ENCODE measurements at regions of chr17 and their contacts with region 1.

Region 1: GRCh38 chr17:78497115-78497540 is 80.1 kb downstream of the DNAH17 start:
- DNase-seq: peak; percentile 72
- ATAC-seq: peak; percentile 96
- H3K4me3 ChIP-seq: no peak overlapping the region
- H3K27ac ChIP-seq: no peak overlapping the region
- H3K4me1 ChIP-seq: no peaks in the 10 kb centered on the region
- H3K27me3 ChIP-seq: peaks cover 9% of the 10 kb centered on the region; the same call in 1 of the 2 replicates
- CTCF ChIP-seq: peak; percentile 92
- POLR2A ChIP-seq: 0 out of 2 replicates have a peak, but pooled peaks have one; percentile 28
- RAD21 ChIP-seq: peak; percentile 98

Region 2: GRCh38 chr17:78708510-78708973 is 211.4 kb after region 1 on chr17:
- CTCF ChIA-PET with region 1: interaction called, 13 read pairs
- POLR2A ChIA-PET with region 1: no interaction called
- dilution Hi-C with region 1: no loop called
- in situ Hi-C with region 1: loop called (anchors 5 kb)
- intact Hi-C with region 1: loop called (anchors 1 kb)
- DNase-seq: peak; percentile 83
- ATAC-seq: peak; percentile 98
- H3K4me3 ChIP-seq: no peak overlapping the region
- H3K27ac ChIP-seq: no peak overlapping the region
- H3K4me1 ChIP-seq: peaks cover 4% of the 10 kb centered on the region; the same call in 1 of the 2 replicates
- H3K27me3 ChIP-seq: no peaks in the 10 kb centered on the region
- CTCF ChIP-seq: peak; percentile 93
- POLR2A ChIP-seq: no peak
- RAD21 ChIP-seq: peak; percentile 99

Region 3: GRCh38 chr17:78745407-78746088 is 248.4 kb after region 1 on chr17:
- CTCF ChIA-PET with region 1: no interaction called
- POLR2A ChIA-PET with region 1: no interaction called
- dilution Hi-C with region 1: no loop called
- in situ Hi-C with region 1: no loop called
- intact Hi-C with region 1: loop called (anchors 1 kb)
- DNase-seq: peak; percentile 49
- ATAC-seq: peak; percentile 42; the same call in 1 of the 2 replicates
- H3K4me3 ChIP-seq: no peak overlapping the region
- H3K27ac ChIP-seq: no peak overlapping the region
- H3K4me1 ChIP-seq: peaks cover 9% of the 10 kb centered on the region
- H3K27me3 ChIP-seq: no peaks in the 10 kb centered on the region
- CTCF ChIP-seq: peak; percentile 56
- POLR2A ChIP-seq: no peak
- RAD21 ChIP-seq: peak; percentile 35

Region 4: GRCh38 chr17:78798695-78799559 is 301.8 kb after region 1 on chr17:
- CTCF ChIA-PET with region 1: interaction called, 4 read pairs
- POLR2A ChIA-PET with region 1: no interaction called
- dilution Hi-C with region 1: no loop called
- in situ Hi-C with region 1: no loop called
- intact Hi-C with region 1: loop called (anchors 1 kb)
- DNase-seq: peak; percentile 13
- ATAC-seq: peak; percentile 50; the same call in 1 of the 2 replicates
- H3K4me3 ChIP-seq: no peak overlapping the region
- H3K27ac ChIP-seq: no peak overlapping the region
- H3K4me1 ChIP-seq: peaks cover 2% of the 10 kb centered on the region; the same call in 1 of the 2 replicates
- H3K27me3 ChIP-seq: no peaks in the 10 kb centered on the region
- CTCF ChIP-seq: peak; percentile 27; the same call in 1 of the 2 replicates
- POLR2A ChIP-seq: no peak
- RAD21 ChIP-seq: peak; percentile 16; the same call in 1 of the 2 replicates

Region 5: DNA sequence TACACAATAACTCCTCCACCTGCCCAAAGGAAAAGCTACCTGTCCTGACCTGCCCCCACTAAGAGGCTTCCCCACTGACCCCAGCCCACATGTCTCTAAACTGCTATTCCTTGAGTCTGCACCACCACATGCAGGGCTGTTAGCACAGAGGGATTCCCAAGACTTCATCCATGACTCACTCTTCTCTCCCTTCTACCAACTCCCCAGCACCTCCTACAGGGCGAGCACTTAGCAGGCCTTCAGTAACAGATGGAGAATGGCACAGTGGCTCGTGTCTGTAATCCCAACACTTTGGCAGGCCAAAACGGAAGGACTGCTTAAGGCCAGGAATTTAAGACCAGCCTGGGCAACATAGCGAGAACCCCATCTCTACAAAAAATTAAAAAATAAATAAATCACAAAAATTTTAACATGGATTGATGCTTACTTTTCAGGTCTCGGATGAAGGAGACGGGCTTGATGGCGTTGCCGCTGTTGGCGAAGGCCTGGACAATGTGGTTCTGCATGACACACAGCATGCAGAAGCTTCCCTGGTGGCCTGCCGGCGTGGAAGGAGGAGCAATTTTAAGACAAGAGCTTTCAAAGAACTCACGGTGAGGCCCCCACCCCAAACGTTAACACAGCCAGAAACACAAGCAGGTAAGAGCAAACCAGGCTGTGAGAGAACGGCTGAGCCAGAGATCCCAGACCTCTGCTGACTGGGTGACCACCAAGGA is 331.5 kb after region 1 on chr17:
- CTCF ChIA-PET with region 1: no interaction called
- POLR2A ChIA-PET with region 1: no interaction called
- dilution Hi-C with region 1: no loop called
- in situ Hi-C with region 1: no loop called
- intact Hi-C with region 1: loop called (anchors 10 kb)
- DNase-seq: peak; percentile 78
- ATAC-seq: peak; percentile 91
- H3K4me3 ChIP-seq: no peak overlapping the region
- H3K27ac ChIP-seq: no peak overlapping the region
- H3K4me1 ChIP-seq: peaks cover 2% of the 10 kb centered on the region; the same call in 1 of the 2 replicates
- H3K27me3 ChIP-seq: no peaks in the 10 kb centered on the region
- CTCF ChIP-seq: peak; percentile 65
- POLR2A ChIP-seq: no peak
- RAD21 ChIP-seq: peak; percentile 47

Region 6: DNA sequence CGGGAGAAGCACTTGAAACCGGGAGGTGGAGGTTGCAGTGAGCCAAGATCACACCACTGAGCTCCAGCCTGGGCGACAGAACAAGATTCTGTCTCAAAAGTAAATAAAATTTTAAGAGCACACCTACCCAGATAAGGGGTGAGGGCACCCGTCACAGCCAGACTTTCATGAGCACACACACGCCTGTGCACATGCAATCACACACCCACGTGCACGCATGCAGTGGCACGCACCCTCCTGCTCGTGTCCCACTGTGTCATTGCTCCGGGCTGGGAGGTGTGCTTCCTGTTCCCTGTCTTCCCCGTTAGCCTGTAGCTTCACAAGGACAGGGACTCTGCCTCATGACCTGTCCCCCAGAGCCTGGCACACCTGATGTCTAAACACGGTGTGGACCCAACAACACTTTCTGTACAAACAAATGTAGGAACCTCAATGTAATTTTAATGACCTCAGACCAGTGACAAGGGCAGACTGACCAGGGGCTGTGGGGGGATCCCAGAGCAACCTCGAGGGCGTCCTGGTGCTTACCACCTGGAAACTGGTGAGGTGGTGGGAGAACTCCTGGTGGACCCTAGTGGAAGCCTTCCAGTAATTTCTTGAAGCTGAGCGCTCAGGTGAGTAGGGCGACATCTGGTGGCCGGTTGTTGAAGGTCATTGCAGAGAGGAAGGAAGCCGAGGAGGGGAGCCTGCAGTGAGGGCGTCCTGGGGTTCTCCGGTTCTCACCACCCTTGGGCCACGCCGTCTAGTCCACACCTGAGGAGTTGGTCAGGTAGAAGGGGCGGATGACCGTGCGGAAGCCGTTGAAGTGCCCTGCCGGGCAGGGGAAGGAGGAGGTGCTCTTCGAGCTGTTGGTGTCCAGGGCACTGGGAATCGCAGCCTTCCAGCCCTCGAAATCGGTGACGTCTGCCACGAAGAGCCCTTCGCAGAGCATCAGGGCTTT is 474.0 kb after region 1 on chr17:
- CTCF ChIA-PET with region 1: no interaction called
- POLR2A ChIA-PET with region 1: no interaction called
- dilution Hi-C with region 1: no loop called
- in situ Hi-C with region 1: loop called (anchors 25 kb)
- intact Hi-C with region 1: no loop called
- DNase-seq: peak; percentile 72
- ATAC-seq: peak; percentile 37
- H3K4me3 ChIP-seq: no peak overlapping the region
- H3K27ac ChIP-seq: no peak overlapping the region; the same call in 1 of the 2 replicates
- H3K4me1 ChIP-seq: peaks cover 19% of the 10 kb centered on the region
- H3K27me3 ChIP-seq: no peaks in the 10 kb centered on the region
- CTCF ChIP-seq: peak; percentile 90
- POLR2A ChIP-seq: no peak
- RAD21 ChIP-seq: peak; percentile 94